Activated naive CD4-positive, alpha-beta T cell treated with anti-CD3 and anti-CD28 coated beads for 36 hours (primary cell): ENCODE measurements at regions of chr3 and their contacts with region 1.

Region 1: DNA sequence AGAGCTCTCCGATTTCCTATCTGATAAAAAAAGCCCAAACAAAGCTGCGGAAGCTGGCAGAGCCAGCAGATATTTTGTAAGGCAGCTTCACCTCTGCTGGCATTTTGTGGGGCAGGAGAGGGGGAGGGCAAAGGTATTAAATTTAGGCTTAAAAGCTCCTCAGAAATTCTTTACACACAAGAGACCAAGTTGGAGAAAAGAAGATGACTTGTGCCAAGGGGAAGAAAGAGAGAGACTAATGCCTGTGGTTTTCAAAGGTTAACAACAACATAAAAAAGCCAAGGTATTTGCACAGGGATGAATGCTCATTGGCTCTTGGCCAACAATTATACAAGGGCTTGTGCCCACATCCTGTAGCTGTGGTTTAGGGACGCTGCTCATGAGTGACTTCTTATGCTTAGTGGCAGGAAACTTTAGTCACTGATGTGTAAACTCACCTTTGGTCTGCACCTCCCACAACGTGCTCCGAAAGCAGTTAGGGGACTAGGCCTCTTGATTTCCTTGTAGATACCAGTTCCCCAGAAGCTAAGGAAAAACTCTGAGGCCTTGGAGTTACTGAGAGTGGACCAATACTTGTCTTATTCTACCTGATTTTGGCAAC is 152.9 kb downstream of the TPRG1 start:
- DNase-seq: peak; percentile 95
- H3K4me3 Mint-ChIP-seq: peak overlapping the region; percentile 36
- H3K27ac Mint-ChIP-seq: peak overlapping the region; percentile 88
- H3K4me1 Mint-ChIP-seq: peaks cover 56% of the 10 kb centered on the region
- H3K27me3 Mint-ChIP-seq: no peaks in the 10 kb centered on the region

Region 2: DNA sequence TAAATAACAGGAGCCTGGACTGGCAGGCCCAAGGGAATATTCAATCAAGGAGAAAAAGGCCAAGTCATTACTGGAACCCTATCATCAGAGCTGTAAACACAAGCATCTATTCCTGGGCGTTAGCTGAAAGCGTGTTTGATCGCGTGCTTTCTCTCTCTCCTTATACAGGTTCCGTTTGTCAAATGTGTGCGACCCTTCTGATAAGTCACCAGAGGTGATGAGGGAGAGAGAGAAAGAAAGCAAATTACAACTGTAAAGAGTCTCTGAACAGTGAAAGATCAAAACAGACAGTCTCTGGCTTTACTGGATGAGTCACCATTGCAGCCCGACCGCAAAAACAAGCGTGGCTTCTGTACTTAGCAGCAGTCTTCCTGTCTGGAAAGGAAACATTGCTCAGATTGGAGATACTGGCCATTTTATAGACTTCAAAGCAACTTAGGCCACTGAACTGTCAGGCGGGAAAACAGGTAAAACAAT is 192.4 kb before region 1 on chr3:
- CTCF ChIA-PET with region 1: no interaction called
- intact Hi-C with region 1: loop called (anchors 1 kb)
- DNase-seq: peak; percentile 91
- H3K4me3 Mint-ChIP-seq: peak overlapping the region; percentile 41
- H3K27ac Mint-ChIP-seq: peak overlapping the region; percentile 76
- H3K4me1 Mint-ChIP-seq: peaks cover 21% of the 10 kb centered on the region
- H3K27me3 Mint-ChIP-seq: no peaks in the 10 kb centered on the region

Region 3: DNA sequence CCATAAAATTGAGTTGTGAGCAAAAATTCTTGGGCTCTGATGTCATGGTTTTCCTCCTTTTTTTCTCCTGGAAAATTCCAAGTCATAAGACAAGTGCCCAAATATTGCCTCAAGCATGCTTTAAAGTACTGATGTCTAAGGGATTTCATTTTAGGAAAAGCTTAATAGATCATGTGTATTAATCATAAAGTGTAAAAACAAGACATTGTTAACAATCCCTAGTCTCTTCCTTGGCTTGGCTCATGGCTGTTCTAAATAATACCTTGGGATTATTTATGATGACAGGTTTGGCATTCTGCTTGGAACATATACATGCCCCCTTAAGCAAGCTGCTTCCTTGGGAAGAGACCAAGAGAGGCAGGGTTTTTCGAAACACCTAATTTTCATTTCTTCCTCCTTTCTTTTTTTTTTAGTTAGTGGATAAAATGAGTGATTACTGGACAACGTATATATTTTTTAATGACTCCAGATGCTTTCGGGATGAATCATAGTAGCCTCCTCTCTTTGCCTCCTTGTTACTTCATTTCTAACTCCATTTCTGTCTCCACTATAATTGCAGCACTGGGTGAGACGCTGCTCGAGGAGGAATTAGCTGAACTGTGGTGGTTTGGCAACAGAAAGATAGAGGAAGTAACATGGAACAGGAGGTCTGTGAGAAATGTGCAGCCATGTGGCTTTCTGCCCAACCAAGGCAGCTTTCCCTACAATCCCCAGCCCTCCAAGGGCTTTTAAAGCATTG is 48.0 kb before region 1 on chr3:
- CTCF ChIA-PET with region 1: interaction called, 6 read pairs
- intact Hi-C with region 1: loop called (anchors 1 kb)
- DNase-seq: no peak
- H3K4me3 Mint-ChIP-seq: no peak overlapping the region
- H3K27ac Mint-ChIP-seq: no peak overlapping the region
- H3K4me1 Mint-ChIP-seq: peaks cover 35% of the 10 kb centered on the region
- H3K27me3 Mint-ChIP-seq: no peaks in the 10 kb centered on the region

Region 4: DNA sequence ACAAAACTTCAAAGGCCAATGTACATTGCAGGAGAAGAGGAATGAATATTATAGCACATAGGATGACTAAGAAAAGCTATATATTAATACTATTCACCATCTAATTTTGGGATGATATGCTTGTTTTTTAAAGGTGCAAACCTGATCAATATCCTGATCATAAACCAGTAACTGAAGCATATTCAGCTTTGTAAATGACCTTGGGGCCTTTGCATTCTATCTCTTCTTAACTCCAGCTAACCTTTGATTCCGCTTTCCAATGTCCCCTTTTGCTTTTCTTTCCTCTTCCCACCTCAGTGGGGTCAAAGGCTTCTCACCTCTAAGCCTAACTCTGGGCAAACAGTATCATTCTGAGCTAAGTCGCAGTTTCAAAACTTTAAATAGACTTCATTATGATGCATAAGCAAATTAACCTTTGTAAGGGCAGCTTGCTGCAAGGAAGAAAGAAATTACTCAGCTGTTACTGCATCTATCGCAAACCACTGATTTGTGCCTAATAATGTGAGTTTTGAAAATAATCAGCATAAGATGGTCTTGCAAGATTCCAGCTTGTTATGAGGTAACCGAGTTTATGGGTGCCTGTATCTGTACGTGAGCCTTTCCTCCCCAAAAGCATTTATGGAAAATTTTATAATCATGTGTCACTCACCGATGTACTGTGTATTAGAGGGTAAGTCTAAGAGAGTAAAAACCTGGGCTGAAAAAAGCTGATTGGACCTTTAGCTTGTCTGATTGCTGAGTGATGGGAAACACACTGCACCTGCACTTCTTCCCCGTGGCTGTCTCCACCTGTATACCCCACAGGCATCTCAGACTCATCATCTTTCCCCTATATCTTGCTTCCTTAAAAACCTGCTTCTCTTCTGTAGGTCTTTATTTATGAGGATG is 36.0 kb before region 1 on chr3:
- CTCF ChIA-PET with region 1: interaction called, 5 read pairs
- intact Hi-C with region 1: loop called (anchors 1 kb)
- DNase-seq: no peak
- H3K4me3 Mint-ChIP-seq: no peak overlapping the region
- H3K27ac Mint-ChIP-seq: peak overlapping the region; percentile 46
- H3K4me1 Mint-ChIP-seq: peaks cover 34% of the 10 kb centered on the region
- H3K27me3 Mint-ChIP-seq: no peaks in the 10 kb centered on the region

Region 5: GRCh38 chr3:189304446-189305351 is 19.9 kb before region 1 on chr3:
- CTCF ChIA-PET with region 1: interaction called, 3 read pairs
- intact Hi-C with region 1: loop called (anchors 1 kb)
- DNase-seq: peak; percentile 59
- H3K4me3 Mint-ChIP-seq: peak overlapping the region; percentile 17
- H3K27ac Mint-ChIP-seq: peak overlapping the region; percentile 68
- H3K4me1 Mint-ChIP-seq: peaks cover 57% of the 10 kb centered on the region
- H3K27me3 Mint-ChIP-seq: no peaks in the 10 kb centered on the region

Region 6: DNA sequence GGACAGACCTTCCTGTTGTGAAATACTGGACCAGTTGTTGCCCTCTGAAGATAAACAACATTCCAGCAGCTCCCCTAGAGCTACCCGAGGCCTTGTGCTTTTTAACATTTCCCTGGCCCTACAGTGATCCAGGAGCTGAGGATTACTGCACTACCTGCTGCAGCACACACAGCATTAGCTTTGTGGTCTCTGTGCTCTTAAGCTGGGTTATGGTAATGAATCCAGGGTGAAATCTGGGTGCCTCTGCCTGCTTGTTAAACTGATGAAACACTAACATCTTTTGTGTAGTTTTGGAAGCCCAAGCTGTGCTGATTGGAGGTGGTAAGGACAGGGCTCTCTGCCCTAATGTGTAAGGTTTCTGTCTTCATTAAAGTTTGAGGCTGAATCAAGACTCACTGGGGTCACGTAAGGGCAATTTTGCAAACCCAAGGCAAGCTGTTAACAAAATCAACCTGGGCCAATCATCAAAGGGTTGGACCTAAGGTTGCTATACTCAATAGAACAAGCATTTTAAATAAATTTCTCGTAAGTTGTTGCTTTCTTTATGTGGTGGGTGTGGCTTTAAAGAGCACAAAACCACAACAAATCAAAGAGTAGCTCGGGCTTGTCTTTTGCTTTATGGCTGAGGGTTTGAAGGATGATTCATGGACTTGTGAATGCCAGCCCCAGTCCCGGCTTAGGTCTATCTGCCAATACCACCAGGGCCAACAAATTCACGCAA is 31.0 kb after region 1 on chr3:
- CTCF ChIA-PET with region 1: interaction called, 4 read pairs
- intact Hi-C with region 1: loop called (anchors 1 kb)
- DNase-seq: peak; percentile 54
- H3K4me3 Mint-ChIP-seq: peak overlapping the region; percentile 7
- H3K27ac Mint-ChIP-seq: peak overlapping the region; percentile 76
- H3K4me1 Mint-ChIP-seq: peaks cover 21% of the 10 kb centered on the region
- H3K27me3 Mint-ChIP-seq: no peaks in the 10 kb centered on the region

Region 7: GRCh38 chr3:189458532-189458931 is 133.9 kb after region 1 on chr3:
- CTCF ChIA-PET with region 1: no interaction called
- intact Hi-C with region 1: no loop called
- DNase-seq: no peak
- H3K4me3 Mint-ChIP-seq: no peak overlapping the region
- H3K27ac Mint-ChIP-seq: no peak overlapping the region
- H3K4me1 Mint-ChIP-seq: no peaks in the 10 kb centered on the region
- H3K27me3 Mint-ChIP-seq: no peaks in the 10 kb centered on the region

Region 8: GRCh38 chr3:190217081-190217480 is 892.4 kb after region 1 on chr3:
- CTCF ChIA-PET with region 1: no interaction called
- intact Hi-C with region 1: no loop called
- DNase-seq: no peak
- H3K4me3 Mint-ChIP-seq: no peak overlapping the region
- H3K27ac Mint-ChIP-seq: no peak overlapping the region
- H3K4me1 Mint-ChIP-seq: no peaks in the 10 kb centered on the region
- H3K27me3 Mint-ChIP-seq: no peaks in the 10 kb centered on the region

Region 9: GRCh38 chr3:190585805-190586630 is 1261.4 kb after region 1 on chr3:
- CTCF ChIA-PET with region 1: no interaction called
- intact Hi-C with region 1: loop called (anchors 10 kb)
- DNase-seq: peak; percentile 78
- H3K4me3 Mint-ChIP-seq: peak overlapping the region; percentile 50
- H3K27ac Mint-ChIP-seq: peak overlapping the region; percentile 88
- H3K4me1 Mint-ChIP-seq: peaks cover 37% of the 10 kb centered on the region
- H3K27me3 Mint-ChIP-seq: no peaks in the 10 kb centered on the region